Activated CD4-positive, alpha-beta T cell treated with anti-CD3 and anti-CD28 coated beads, Interleukin-2, amount 10 ng/mL, durations not matched to agents 7 days and 5 days (primary cell): ENCODE measurements at regions of chr22 and their contacts with region 1.

Region 1: GRCh38 chr22:50341977-50342650 is 1.0 kb upstream of the PPP6R2 start:
- DNase-seq: peak; percentile 93
- H3K4me3 Mint-ChIP-seq: peak overlapping the region; percentile 79
- H3K27ac Mint-ChIP-seq: peak overlapping the region; percentile 94
- H3K4me1 Mint-ChIP-seq: peaks cover 11% of the 10 kb centered on the region
- H3K27me3 Mint-ChIP-seq: no peaks in the 10 kb centered on the region

Region 2: DNA sequence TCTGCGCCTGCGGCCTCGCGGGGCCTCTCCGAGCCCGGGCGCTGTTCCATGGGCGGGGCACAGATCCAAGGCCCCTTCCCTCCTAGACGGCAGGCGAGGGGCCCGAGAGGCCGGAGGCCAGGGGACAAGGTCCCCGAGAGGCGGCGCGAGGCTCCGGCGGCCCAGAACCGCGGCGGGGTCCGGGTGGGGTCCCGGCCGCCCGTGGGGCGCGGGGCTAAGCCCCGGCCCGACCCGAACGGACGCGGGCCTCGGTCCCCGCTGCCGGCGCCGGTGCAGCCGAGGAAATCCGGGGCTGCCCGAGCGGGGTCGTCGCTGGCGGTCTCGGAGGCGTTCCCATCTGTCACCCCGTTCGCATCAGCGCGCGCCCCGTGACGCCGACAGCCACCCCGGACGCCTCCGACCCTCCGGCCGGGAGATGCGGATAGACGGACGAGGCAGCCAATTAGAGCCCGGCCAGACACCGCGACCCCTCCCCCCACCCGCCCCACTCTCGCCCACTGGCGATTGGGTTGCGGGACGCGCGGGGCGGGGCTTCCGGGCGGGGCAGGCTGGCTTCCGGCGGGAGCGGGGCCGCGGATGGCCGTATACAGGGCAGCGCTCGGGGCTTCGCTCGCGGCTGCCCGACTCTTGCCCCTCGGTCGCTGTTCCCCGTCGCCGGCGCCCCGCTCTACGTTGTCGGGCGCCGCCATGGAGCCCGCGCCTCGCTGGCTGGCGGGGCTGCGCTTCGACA is 141.5 kb before region 1 on chr22 and contains the start of gene SELENOO:
- CTCF ChIA-PET with region 1: no interaction called
- POLR2A ChIA-PET with region 1: no interaction called
- DNase-seq: peak; percentile 89
- H3K4me3 Mint-ChIP-seq: peak within 1 kb of the TSS; percentile 77
- H3K27ac Mint-ChIP-seq: peak within 1 kb of the TSS; percentile 67
- H3K4me1 Mint-ChIP-seq: peaks cover 28% of the 10 kb centered on the region
- H3K27me3 Mint-ChIP-seq: no peaks in the 10 kb centered on the region
- total RNA-seq, gene SELENOO: 17.4 to 25.5 TPM

Region 3: GRCh38 chr22:50250555-50251476 is 91.3 kb before region 1 on chr22 and contains the start of gene HDAC10:
- CTCF ChIA-PET with region 1: interaction called, 13 read pairs
- POLR2A ChIA-PET with region 1: no interaction called
- DNase-seq: peak; percentile 89
- H3K4me3 Mint-ChIP-seq: peak within 1 kb of the TSS; percentile 83
- H3K27ac Mint-ChIP-seq: peak within 1 kb of the TSS; percentile 76
- H3K4me1 Mint-ChIP-seq: peaks cover 24% of the 10 kb centered on the region
- H3K27me3 Mint-ChIP-seq: no peaks in the 10 kb centered on the region
- total RNA-seq, gene HDAC10: 68.3 to 93.6 TPM

Region 4: GRCh38 chr22:50314455-50315288 is 27.4 kb before region 1 on chr22:
- CTCF ChIA-PET with region 1: no interaction called
- POLR2A ChIA-PET with region 1: no interaction called
- DNase-seq: peak; percentile 77
- H3K4me3 Mint-ChIP-seq: peak overlapping the region; percentile 78
- H3K27ac Mint-ChIP-seq: peak overlapping the region; percentile 94
- H3K4me1 Mint-ChIP-seq: peaks cover 19% of the 10 kb centered on the region
- H3K27me3 Mint-ChIP-seq: no peaks in the 10 kb centered on the region

Region 5: DNA sequence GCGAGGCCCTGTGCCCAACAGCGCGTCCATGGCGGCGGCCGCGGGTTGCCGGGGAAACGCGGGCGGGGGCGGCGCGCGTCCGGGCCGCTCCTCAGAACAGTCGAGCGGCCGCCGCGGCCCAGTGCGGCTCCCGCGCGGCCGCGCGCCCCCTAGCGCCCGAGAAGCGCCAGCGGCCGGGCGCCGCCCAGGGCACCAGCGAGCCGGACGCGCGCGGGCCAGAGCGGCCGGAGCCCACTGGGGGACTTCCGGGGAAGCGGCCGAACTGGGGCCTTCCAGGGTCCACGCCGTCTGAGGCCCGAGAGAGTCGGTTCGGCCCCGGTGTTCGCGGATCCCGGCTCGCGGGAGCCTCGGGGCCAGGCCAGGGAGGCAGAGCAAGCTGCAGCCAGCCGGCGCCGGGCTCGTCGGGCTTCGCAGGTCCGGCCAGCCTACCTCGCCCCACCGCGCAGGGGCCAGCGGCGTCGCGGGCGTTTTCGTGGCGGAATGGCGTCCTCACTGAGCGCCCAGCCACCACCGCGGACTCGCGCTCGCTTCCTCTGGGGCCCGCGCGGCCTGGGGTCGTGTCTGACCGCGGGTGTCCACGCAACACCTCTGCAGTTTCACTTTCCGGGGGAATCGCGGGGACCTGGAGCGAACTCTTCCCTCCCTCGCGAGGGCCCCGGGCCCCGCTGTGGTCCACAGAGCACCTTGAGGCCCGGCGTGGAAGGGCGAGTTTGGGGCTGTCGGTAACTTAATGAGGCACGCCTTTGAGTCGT is 15.0 kb before region 1 on chr22 and contains the start of gene DENND6B:
- CTCF ChIA-PET with region 1: interaction called, 12 read pairs
- POLR2A ChIA-PET with region 1: no interaction called
- DNase-seq: peak; percentile 72
- H3K4me3 Mint-ChIP-seq: peak within 1 kb of the TSS; percentile 73
- H3K27ac Mint-ChIP-seq: peak within 1 kb of the TSS; percentile 88
- H3K4me1 Mint-ChIP-seq: peaks cover 13% of the 10 kb centered on the region
- H3K27me3 Mint-ChIP-seq: peaks cover 24% of the 10 kb centered on the region
- total RNA-seq, gene DENND6B: 3.1 to 3.6 TPM

Region 6: DNA sequence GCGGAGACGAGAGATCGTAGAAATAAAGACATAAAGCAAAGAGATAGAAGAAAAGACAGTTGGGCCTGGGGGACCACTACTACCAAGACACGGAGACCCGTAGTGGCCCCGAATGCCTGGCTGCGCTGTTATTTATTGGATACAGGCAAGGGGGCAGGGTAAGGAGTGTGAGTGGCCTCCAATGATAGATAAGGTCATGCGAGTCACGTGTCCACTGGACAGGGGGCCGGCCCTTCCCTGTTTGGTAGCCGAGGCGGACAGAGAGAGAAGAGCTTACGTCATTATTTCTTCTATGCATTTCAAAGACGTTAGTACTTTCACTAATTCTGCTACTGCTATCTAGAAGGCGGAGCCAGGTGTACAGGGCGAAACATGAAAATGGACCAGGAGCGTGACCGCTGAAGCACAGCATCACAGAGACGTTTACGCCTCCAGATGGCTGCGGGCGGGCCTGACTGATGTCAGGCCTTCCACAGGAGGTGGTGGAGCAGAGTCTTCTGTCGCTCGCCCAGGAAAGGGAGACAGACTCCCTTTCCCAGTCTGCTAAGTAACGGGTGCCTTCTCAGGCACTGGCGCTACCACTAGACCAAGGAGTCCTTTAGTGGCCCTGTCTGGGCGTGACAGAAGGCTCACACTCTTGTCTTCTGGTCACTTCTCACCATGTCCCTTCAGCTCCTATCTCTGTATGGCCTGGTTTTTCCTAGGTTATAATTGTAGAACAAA is 25.8 kb after region 1 on chr22:
- CTCF ChIA-PET with region 1: no interaction called
- POLR2A ChIA-PET with region 1: no interaction called
- DNase-seq: no peak
- H3K4me3 Mint-ChIP-seq: no peak overlapping the region
- H3K27ac Mint-ChIP-seq: no peak overlapping the region
- H3K4me1 Mint-ChIP-seq: peaks cover 9% of the 10 kb centered on the region
- H3K27me3 Mint-ChIP-seq: no peaks in the 10 kb centered on the region

Region 7: GRCh38 chr22:50406416-50407170 is 64.5 kb after region 1 on chr22:
- CTCF ChIA-PET with region 1: no interaction called
- POLR2A ChIA-PET with region 1: no interaction called
- DNase-seq: no peak
- H3K4me3 Mint-ChIP-seq: no peak overlapping the region
- H3K27ac Mint-ChIP-seq: peak overlapping the region; percentile 42
- H3K4me1 Mint-ChIP-seq: peaks cover 1% of the 10 kb centered on the region
- H3K27me3 Mint-ChIP-seq: no peaks in the 10 kb centered on the region